ENCODE measurements at regions of chr14 and their contacts with region 1.

Region 1: DNA sequence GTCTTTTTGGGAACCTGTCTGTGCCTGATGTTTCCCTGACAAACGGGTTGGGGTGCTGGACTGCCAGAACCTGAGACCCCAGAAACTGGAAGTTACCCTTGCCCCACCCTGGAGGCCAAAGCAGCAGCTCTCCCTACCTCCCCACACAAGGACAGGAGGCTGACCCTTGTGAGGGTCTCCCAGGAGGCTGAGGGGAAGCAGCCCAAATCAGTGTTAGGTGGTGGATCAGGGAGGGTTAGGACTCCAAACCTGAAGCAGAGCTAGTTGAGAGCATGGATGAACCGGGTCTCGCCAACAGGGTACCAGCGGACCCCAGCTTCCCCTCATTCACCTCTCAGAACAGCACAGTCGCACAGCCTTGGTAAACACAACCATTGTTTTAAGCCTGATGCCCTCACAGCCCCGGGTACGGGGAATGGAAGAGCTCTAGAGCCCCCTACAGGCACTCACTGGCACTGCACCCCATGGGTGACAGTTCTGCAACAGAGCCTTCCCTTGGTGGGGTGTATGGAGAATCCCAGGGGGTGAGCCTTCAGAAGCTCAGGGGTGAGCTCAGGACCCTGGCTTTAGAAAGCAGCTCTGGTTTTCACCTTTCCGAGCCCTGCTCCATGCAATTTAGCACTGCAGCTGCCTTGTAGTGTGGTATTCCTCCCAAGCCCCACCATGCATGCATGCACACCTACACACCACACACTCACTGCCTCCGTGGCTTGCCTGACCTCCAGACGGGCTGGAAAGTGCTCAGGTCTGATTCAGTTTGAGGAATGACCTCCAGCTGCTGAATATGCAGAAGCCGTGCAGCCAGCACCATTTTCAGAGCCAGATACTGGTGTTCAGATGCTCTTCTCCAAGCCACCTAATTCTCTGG is 11.2 kb downstream of the ESRRB start:
- DNase-seq: peak; percentile 77
- H3K4me3 Mint-ChIP-seq: no peak overlapping the region
- H3K27ac Mint-ChIP-seq: no peak overlapping the region
- H3K4me1 Mint-ChIP-seq: no peaks in the 10 kb centered on the region
- H3K27me3 Mint-ChIP-seq: peaks cover 28% of the 10 kb centered on the region

Region 2: GRCh38 chr14:75709207-75709812 is 677.8 kb before region 1 on chr14:
- CTCF ChIA-PET with region 1: interaction called, 3 read pairs
- intact Hi-C with region 1: loop called (anchors 2 kb)
- DNase-seq: peak; percentile 80
- H3K4me3 Mint-ChIP-seq: no peak overlapping the region
- H3K27ac Mint-ChIP-seq: no peak overlapping the region
- H3K4me1 Mint-ChIP-seq: no peaks in the 10 kb centered on the region
- H3K27me3 Mint-ChIP-seq: no peaks in the 10 kb centered on the region

Region 3: GRCh38 chr14:76050797-76051392 is 336.3 kb before region 1 on chr14:
- CTCF ChIA-PET with region 1: interaction called, 9 read pairs
- intact Hi-C with region 1: loop called (anchors 1 kb)
- DNase-seq: peak; percentile 76
- H3K4me3 Mint-ChIP-seq: no peak overlapping the region
- H3K27ac Mint-ChIP-seq: no peak overlapping the region
- H3K4me1 Mint-ChIP-seq: no peaks in the 10 kb centered on the region
- H3K27me3 Mint-ChIP-seq: no peaks in the 10 kb centered on the region